Prostate gland (tissue), 2 donors: ENCODE measurements at regions of chr19 and their contacts with region 1.

Region 1: DNA sequence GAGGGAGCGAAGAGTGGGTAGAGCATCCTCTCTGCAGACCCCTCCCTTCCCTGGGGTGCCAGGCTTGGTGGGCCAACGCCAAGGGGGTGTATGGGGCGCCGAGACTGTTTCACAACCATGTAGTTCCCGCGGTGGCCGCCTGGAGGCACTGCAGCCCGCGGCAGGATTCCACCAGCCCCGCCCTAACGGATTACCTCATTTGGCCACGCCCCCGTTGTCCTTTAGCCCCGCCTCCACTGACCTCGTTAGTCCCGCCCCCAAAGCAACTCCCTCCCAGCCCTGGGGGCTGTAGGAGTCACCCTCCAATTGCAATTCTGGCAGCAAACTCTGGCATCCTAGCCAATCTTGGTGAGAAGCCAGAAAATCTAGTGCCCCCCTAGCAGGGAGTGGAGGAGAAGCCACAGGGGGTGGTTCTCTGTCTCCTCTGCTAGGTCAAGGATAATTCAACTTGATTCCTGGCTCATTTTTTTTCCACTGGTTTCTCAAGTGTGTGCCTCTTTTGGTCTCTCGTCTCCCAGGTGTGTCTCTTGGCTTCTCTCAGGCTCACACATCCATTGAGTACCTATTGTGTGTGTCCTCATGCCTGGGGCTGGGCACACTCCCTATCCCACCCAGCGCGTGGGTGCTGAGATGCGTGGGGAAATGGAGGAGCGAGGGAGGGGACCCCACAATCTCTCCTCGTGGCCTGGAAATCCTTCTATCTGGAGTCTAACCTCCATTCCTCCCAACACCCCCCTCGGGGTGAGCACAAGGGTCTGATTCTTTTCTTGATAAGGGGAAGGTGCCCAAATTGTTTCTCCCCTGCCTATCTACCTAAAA is 2.0 kb downstream of the OLFM2 start:
- DNase-seq: peak; percentile 52
- H3K4me3 ChIP-seq: no peak overlapping the region
- H3K27ac ChIP-seq: peak overlapping the region in 1 of 2 donors; percentile 20
- H3K4me1 ChIP-seq: no peaks in the 10 kb centered on the region
- H3K27me3 ChIP-seq: no peaks in the 10 kb centered on the region
- CTCF ChIP-seq: peak; percentile 65 to 90 (median 77)
- POLR2A ChIP-seq: no peak

Region 2: DNA sequence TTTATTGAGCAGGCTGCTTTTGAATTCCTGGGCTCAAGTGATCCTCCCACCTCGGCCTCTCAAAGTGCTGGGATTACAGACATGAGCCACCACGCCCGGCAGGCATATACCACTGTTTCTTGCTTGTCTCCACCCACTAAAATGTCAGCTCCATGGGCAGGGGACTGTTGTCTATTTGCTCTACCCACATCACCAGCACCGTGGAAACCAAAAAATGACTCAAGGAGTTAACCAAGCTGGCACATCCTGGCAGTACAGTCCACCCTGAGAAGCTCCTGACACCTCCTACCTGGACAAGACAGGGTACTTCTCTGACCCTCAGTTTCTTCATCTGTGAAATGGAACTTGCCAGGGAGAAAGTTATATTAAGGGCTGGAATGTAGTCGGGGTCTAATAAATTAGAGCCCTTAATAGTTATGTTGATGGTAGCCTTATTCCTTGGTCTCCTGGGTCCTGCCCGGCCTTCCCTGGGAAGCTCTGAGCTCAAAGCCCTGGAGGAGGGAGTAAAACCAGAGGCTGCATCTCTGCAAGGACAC is 92.9 kb after region 1 on chr19:
- intact Hi-C with region 1: loop called (anchors 2 kb)
- DNase-seq: no peak
- H3K4me3 ChIP-seq: no peak overlapping the region
- H3K27ac ChIP-seq: no peak overlapping the region
- H3K4me1 ChIP-seq: no peaks in the 10 kb centered on the region
- H3K27me3 ChIP-seq: no peaks in the 10 kb centered on the region
- CTCF ChIP-seq: no peak
- POLR2A ChIP-seq: no peak

Region 3: GRCh38 chr19:10251792-10252694 is 317.7 kb after region 1 on chr19 and contains the start of gene MRPL4:
- intact Hi-C with region 1: loop called (anchors 10 kb)
- DNase-seq: peak; percentile 97
- H3K4me3 ChIP-seq: peak within 1 kb of the TSS; percentile 85 to 93
- H3K27ac ChIP-seq: peak within 1 kb of the TSS; percentile 70 to 73
- H3K4me1 ChIP-seq: peaks cover 4% of the 10 kb centered on the region
- H3K27me3 ChIP-seq: no peaks in the 10 kb centered on the region
- CTCF ChIP-seq: peak in 2 of 4 experiments; percentile 15 to 32
- POLR2A ChIP-seq: peak; percentile 26
- total RNA-seq, gene MRPL4: 72.6 to 75.6 TPM